Aorta (tissue), 5 donors: ENCODE measurements at regions of chr2 and their contacts with region 1.

Region 1: DNA sequence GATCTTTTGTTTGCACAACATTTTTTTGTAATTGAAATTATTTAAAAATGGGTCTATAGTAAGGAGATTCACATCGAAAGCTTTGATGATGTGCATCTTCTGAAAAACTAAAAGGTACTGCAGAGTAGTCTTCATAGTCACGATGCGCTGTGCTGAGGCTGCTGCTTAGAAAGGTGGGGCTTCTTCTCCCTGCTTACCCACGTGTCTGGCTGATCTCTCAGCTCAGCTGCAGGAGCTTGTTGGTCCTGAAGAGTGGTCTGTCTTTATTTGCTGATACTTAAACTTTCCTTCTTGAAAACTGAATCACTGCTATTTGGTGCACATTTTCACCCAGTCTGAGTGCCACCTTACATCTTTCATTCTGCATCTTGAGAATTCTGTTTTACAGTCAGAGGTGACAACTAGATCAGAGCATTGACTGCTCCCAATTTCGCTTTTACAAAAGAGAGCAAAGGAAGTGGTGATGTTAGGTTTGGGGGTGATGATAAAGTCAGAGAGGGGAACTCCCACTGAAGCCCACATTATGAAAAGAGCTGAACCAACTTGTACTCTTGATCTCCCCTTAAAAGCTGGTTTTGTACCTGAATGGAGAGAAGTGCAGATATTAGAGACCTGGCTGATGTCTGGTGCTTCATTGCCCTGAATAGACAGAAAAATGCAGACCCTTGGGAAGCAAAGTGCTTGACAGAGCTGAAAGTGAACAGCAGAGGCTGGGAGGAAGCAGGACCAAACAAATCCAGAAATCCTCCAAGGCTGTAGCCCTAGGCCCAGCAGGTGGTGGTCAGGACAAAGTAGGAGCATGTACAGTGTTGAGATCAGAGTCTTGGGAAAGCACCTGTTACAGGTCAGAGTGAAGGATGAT is 984.5 kb downstream of the TSN start:
- DNase-seq: no peak
- ATAC-seq: no peak
- H3K4me3 ChIP-seq: no peak overlapping the region
- H3K27ac ChIP-seq: no peak overlapping the region
- H3K4me1 ChIP-seq: no peaks in the 10 kb centered on the region
- H3K27me3 ChIP-seq: no peaks in the 10 kb centered on the region

Region 2: DNA sequence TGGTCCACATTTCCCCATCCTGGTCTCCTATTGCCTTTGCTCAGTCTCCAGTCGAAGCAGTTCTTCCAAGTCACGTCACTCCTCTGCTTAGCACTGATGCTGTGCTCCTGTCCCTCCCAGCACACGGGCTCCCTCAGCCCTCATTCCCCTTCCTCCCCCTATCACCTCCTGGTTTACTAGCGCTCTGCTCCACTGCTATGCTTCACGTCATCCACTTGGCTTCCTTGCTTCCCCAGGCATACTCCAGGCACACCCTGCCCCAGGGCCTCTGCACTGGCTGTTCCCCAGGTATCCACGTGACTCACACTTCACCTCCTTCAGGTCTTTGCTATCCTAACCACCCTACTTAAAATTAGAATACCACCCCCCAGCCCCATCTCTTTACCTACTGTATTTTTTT is 1735.0 kb before region 1 on chr2:
- intact Hi-C with region 1: no loop called
- DNase-seq: no peak
- ATAC-seq: no peak
- H3K4me3 ChIP-seq: no peak overlapping the region
- H3K27ac ChIP-seq: no peak overlapping the region
- H3K4me1 ChIP-seq: no peaks in the 10 kb centered on the region
- H3K27me3 ChIP-seq: no peaks in the 10 kb centered on the region

Region 3: DNA sequence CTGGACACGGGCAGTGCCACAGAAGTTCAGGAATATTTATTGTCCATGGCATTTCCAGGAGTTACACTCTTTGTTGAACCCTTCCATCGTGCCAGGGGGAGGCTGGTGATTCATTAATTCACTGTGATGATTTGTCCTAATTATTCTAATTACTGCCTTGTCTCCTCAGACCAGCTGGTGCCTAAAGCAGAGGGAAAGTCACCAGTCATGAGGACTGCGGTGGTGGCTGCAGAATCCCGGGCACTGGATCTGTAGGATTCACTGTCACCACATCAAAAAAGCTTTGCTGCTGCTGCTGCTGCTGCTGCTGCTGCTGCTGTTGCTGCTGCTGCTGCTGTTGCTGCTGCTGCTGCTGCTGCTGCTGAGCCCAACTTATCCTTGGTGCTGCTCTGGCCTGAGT is 76.3 kb before region 1 on chr2:
- intact Hi-C with region 1: loop called in 1 of 2 experiments (anchors 2 kb)
- DNase-seq: no peak
- ATAC-seq: no peak
- H3K4me3 ChIP-seq: no peak overlapping the region
- H3K27ac ChIP-seq: no peak overlapping the region
- H3K4me1 ChIP-seq: no peaks in the 10 kb centered on the region
- H3K27me3 ChIP-seq: peaks cover 0 to 1% of the 10 kb centered on the region in 2 donors

Region 4: DNA sequence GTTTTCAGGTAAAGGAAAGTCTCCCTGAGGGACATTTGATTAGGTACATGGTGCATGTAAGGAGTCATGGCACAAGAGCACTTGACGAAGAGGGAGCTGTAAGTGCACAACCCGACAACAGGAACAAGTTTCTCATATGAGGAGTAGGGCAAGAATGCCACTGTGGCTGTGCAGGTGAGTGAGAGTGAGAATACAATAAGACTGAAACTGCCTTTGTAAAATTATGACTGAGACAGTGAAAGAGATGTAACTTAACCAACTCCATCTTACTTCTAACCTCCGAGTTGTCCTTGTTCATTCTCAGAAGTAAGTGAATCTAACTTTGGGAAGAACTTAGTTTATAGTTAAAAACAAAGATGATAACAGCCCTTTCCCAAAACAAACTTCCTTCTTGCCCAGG is 259.3 kb after region 1 on chr2:
- intact Hi-C with region 1: no loop called
- DNase-seq: no peak
- ATAC-seq: no peak
- H3K4me3 ChIP-seq: no peak overlapping the region
- H3K27ac ChIP-seq: no peak overlapping the region
- H3K4me1 ChIP-seq: no peaks in the 10 kb centered on the region
- H3K27me3 ChIP-seq: no peaks in the 10 kb centered on the region